ENCODE measurements at regions of chr3 and their contacts with region 1.

Region 1: GRCh38 chr3:27134165-27134796 is 234.9 kb downstream of the NEK10 start:
- DNase-seq: peak; percentile 46
- H3K4me3 ChIP-seq: no peak overlapping the region
- H3K27ac ChIP-seq: no peak overlapping the region
- H3K4me1 ChIP-seq: no peaks in the 10 kb centered on the region
- H3K27me3 ChIP-seq: no peaks in the 10 kb centered on the region
- CTCF ChIP-seq: peak; percentile 86 to 95

Region 2: GRCh38 chr3:27185231-27185989 is 51.1 kb after region 1 on chr3:
- CTCF ChIA-PET with region 1: no interaction called
- dilution Hi-C with region 1: loop called (anchors 5 kb)
- in situ Hi-C with region 1: no loop called
- intact Hi-C with region 1: no loop called
- DNase-seq: no peak
- H3K4me3 ChIP-seq: no peak overlapping the region
- H3K27ac ChIP-seq: no peak overlapping the region
- H3K4me1 ChIP-seq: no peaks in the 10 kb centered on the region
- H3K27me3 ChIP-seq: no peaks in the 10 kb centered on the region
- CTCF ChIP-seq: no peak

Region 3: DNA sequence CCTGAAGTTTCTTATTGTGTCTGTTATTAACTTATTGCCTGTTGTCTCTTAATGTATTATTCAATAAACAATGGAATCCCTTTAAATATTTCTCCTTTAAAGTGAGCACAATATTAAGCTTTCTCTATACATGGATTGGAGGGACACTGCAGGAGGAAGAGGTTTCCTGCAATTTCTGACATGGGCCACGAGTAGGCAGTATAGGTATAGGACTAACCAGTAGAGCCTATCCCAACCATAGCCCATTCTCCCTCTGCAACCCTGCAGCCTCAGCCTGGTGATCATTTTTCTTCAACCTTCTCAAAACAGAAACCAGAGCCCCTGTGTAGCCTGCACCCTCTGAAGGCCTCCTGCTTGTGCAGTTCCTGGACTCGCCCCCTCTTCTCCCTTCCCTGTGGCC is 110.1 kb after region 1 on chr3:
- CTCF ChIA-PET with region 1: no interaction called
- dilution Hi-C with region 1: no loop called
- in situ Hi-C with region 1: loop called in 1 of 2 experiments (anchors 10 kb)
- intact Hi-C with region 1: no loop called
- DNase-seq: no peak
- H3K4me3 ChIP-seq: no peak overlapping the region
- H3K27ac ChIP-seq: no peak overlapping the region
- H3K4me1 ChIP-seq: no peaks in the 10 kb centered on the region
- H3K27me3 ChIP-seq: no peaks in the 10 kb centered on the region
- CTCF ChIP-seq: no peak

Region 4: DNA sequence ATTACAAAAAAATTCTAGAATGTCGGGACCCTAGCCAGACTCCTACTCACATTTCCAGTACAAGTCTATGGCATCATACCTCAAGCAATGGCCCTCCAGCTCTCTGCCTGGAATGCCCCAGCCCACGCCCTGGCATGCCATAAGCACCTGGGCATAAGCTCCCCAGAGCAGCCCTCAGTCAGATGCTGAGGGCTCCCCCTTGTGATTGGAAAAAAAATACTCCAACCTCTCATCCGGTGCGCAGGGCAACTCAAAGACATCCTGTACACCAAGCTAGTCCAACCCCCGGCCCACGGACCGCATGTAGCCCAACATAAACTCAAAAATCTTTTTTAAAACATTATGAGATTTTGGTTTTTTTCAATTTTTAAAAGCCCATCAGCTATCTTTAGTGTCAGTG is 119.5 kb after region 1 on chr3:
- CTCF ChIA-PET with region 1: interaction called, 11 read pairs
- dilution Hi-C with region 1: no loop called
- in situ Hi-C with region 1: loop called (anchors 10 kb)
- intact Hi-C with region 1: loop called (anchors 1 kb)
- DNase-seq: peak; percentile 76
- H3K4me3 ChIP-seq: no peak overlapping the region
- H3K27ac ChIP-seq: no peak overlapping the region
- H3K4me1 ChIP-seq: peaks cover 3% of the 10 kb centered on the region
- H3K27me3 ChIP-seq: no peaks in the 10 kb centered on the region
- CTCF ChIP-seq: peak; percentile 52 to 82